CD4-positive, alpha-beta memory T cell (primary cell): ENCODE measurements at regions of chr2 and their contacts with region 1.

Region 1: GRCh38 chr2:61922714-61923113 is 17.2 kb downstream of the COMMD1 start:
- DNase-seq: no peak
- H3K4me3 ChIP-seq: no peak overlapping the region
- H3K4me3 Mint-ChIP-seq: no peak overlapping the region
- H3K27ac ChIP-seq: no peak overlapping the region
- H3K27ac Mint-ChIP-seq: peak overlapping the region in 1 of 7 donors; percentile 43
- H3K4me1 ChIP-seq: no peaks in the 10 kb centered on the region
- H3K4me1 Mint-ChIP-seq: no peaks in the 10 kb centered on the region
- H3K27me3 ChIP-seq: no peaks in the 10 kb centered on the region
- H3K27me3 Mint-ChIP-seq: no peaks in the 10 kb centered on the region

Region 2: GRCh38 chr2:61877571-61878245 is 45.0 kb before region 1 on chr2:
- CTCF ChIA-PET with region 1: no interaction called
- POLR2A ChIA-PET with region 1: no interaction called
- intact Hi-C with region 1: no loop called
- DNase-seq: no peak
- H3K4me3 ChIP-seq: no peak overlapping the region
- H3K4me3 Mint-ChIP-seq: no peak overlapping the region
- H3K27ac ChIP-seq: no peak overlapping the region
- H3K27ac Mint-ChIP-seq: no peak overlapping the region
- H3K4me1 ChIP-seq: no peaks in the 10 kb centered on the region
- H3K4me1 Mint-ChIP-seq: peaks cover 0 to 1% (median 0%) of the 10 kb centered on the region in 4 donors
- H3K27me3 ChIP-seq: no peaks in the 10 kb centered on the region
- H3K27me3 Mint-ChIP-seq: no peaks in the 10 kb centered on the region

Region 3: DNA sequence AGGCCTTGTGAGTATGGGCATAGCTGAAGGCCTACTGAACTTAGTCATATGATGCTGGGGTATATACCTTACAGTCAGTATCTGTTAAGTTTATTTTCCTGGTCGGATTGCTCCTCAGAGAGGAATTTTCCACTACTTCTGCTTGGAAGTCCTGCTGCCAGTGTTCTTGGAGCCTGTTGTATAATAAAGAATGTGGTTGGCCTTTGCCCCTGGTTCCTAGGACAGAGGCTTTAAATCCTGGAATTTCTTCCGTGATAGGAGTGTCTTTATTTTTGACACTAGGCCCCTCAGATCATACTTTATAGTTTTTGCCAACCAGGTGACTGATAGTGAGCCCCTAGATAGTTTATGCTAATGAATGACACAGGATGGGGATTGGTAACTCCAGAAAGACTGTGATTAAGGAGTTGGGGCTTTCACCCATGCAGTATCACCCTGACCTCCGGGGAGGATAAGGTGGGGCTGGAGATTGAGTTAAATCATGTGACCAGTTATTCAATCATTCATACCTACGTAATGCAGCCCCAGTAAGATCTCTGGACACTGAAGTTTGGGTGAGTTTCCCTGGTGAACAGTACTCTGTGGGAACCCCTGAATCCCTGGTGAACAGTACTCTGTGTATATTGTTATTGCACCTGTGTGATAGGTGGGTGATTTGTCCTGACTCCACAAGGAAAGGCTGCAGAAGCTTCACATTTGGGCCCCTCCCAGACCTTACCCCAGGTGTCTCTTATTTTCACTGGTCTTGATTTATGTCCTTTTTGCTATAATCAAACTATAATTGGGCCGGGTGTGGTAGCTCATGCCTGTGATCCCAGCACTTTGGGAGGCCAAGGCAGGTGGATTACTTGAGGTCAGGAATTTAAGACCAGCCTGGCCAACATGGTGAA is 39.6 kb after region 1 on chr2:
- CTCF ChIA-PET with region 1: no interaction called
- POLR2A ChIA-PET with region 1: no interaction called
- intact Hi-C with region 1: no loop called
- DNase-seq: no peak
- H3K4me3 ChIP-seq: no peak overlapping the region
- H3K4me3 Mint-ChIP-seq: no peak overlapping the region
- H3K27ac ChIP-seq: no peak overlapping the region
- H3K27ac Mint-ChIP-seq: no peak overlapping the region
- H3K4me1 ChIP-seq: peaks cover 10% of the 10 kb centered on the region
- H3K4me1 Mint-ChIP-seq: peaks cover 6 to 13% (median 8%) of the 10 kb centered on the region in 4 donors
- H3K27me3 ChIP-seq: no peaks in the 10 kb centered on the region
- H3K27me3 Mint-ChIP-seq: no peaks in the 10 kb centered on the region

Region 4: GRCh38 chr2:62339413-62339812 is 416.7 kb after region 1 on chr2:
- CTCF ChIA-PET with region 1: interaction called, 4 read pairs
- POLR2A ChIA-PET with region 1: no interaction called
- intact Hi-C with region 1: loop called (anchors 1 kb)
- DNase-seq: peak in 1 of 5 donors; percentile 5
- H3K4me3 ChIP-seq: no peak overlapping the region
- H3K4me3 Mint-ChIP-seq: no peak overlapping the region
- H3K27ac ChIP-seq: no peak overlapping the region
- H3K27ac Mint-ChIP-seq: no peak overlapping the region
- H3K4me1 ChIP-seq: no peaks in the 10 kb centered on the region
- H3K4me1 Mint-ChIP-seq: peaks cover 0 to 7% (median 0%) of the 10 kb centered on the region in 4 donors
- H3K27me3 ChIP-seq: no peaks in the 10 kb centered on the region
- H3K27me3 Mint-ChIP-seq: no peaks in the 10 kb centered on the region

Region 5: DNA sequence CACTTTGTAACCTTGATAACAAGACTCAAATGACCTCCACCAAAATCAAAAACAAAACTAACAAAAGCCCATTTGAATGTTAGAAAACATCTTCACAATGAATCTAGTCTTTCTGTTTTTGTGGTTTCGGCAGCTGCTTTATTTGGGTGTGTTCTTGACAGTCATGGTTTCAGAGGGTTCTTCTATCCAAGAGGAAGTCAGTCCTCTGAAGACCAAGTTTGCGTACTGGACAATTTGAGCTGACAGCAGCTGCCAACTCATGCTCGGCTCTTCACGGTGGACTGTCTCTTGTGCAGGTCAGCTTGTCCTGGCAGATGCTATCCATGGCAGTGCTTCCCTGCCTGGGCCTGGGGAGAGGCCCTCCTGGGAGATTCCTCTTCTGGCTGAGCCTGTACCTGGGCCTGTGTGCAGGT is 492.3 kb after region 1 on chr2:
- CTCF ChIA-PET with region 1: interaction called, 67 read pairs
- POLR2A ChIA-PET with region 1: interaction called, 3 read pairs
- intact Hi-C with region 1: no loop called
- DNase-seq: no peak
- H3K4me3 ChIP-seq: no peak overlapping the region
- H3K4me3 Mint-ChIP-seq: no peak overlapping the region
- H3K27ac ChIP-seq: no peak overlapping the region
- H3K27ac Mint-ChIP-seq: peak overlapping the region in 2 of 7 donors; percentile 32 to 46
- H3K4me1 ChIP-seq: peaks cover 4% of the 10 kb centered on the region
- H3K4me1 Mint-ChIP-seq: peaks cover 0 to 17% (median 2%) of the 10 kb centered on the region in 4 donors
- H3K27me3 ChIP-seq: no peaks in the 10 kb centered on the region
- H3K27me3 Mint-ChIP-seq: peaks cover 0 to 3% of the 10 kb centered on the region in 2 donors

Region 6: DNA sequence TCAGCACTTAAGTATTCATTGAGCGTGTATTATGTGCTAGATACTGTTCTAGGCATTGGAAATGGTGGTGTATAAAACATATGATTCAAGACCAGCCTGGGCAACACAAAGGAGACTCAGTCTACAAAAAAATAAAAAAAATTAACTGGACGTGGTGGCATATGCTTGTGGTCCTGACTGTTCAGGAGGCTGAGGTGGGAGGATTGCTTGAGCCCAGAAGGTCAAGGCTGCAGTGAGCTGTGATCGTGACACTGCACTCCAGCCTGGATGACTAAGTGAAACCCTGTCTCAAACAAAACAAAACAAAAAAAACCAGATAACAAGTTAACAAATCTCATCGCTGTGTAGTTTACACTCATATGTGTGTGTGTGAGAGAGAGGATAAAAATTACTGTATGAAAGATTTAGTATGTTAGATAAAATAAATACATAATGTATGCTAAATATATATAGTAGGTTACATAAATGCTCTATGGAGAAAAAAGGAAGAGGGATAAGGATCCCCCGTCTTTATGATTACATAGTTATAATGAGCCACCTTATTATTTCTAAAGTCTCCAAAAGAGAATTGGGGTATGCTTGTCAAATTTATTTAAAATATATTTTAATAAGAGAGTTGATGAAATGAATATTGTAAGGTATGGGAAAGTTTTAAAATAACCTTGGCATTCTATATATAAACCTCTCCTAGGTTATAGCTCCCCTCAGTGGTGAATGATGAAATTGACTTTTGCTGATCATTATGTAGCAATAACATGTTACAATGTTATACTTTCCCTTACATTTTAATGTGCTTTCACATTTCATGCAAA is 852.0 kb after region 1 on chr2:
- CTCF ChIA-PET with region 1: no interaction called
- POLR2A ChIA-PET with region 1: no interaction called
- intact Hi-C with region 1: loop called (anchors 1 kb)
- DNase-seq: peak in 4 of 5 donors; percentile 25 to 42 (median 32)
- H3K4me3 ChIP-seq: no peak overlapping the region
- H3K4me3 Mint-ChIP-seq: no peak overlapping the region
- H3K27ac ChIP-seq: no peak overlapping the region
- H3K27ac Mint-ChIP-seq: peak overlapping the region in 1 of 7 donors; percentile 75
- H3K4me1 ChIP-seq: no peaks in the 10 kb centered on the region
- H3K4me1 Mint-ChIP-seq: peaks cover 0 to 11% (median 5%) of the 10 kb centered on the region in 4 donors
- H3K27me3 ChIP-seq: no peaks in the 10 kb centered on the region
- H3K27me3 Mint-ChIP-seq: no peaks in the 10 kb centered on the region